ENCODE measurements at regions of chr3 and their contacts with region 1.

Region 1: DNA sequence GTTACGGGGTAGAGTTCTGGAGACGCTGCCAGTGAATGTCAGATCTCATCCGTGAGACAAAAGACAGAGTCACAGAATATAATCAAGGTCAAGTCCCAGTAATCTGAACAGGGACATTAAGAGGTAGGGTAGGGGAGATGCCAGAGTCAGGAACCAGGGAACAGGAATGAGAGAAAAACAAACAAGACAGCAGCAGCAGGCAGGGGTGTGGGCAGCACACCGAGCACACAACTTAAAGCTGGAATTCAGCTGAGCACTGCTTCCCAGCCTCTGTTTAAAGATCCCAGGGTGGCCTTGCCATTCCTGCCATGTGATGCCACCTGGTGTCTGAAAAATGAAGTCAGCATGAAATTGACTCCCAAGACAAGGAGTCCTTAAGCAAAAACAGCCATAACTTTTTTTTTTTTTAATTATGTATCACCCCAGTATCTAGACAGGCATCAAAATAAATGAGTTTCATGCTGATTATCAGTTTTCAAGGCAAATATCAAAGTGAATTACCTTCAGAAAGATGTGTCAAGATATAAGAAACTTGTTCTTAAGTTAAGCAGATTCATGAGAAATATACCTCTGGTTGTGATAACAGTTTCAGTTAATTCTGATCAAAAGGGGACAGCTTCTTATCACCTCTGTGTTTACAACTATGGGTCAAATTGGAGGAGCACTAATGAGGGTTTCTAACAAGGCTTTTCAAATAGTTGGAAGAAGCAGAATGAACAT is 203.7 kb downstream of the SLC9A9 start:
- DNase-seq: peak; percentile 64
- H3K4me3 ChIP-seq: no peak overlapping the region
- H3K27ac ChIP-seq: no peak overlapping the region
- H3K4me1 ChIP-seq: no peaks in the 10 kb centered on the region
- H3K27me3 ChIP-seq: no peaks in the 10 kb centered on the region
- CTCF ChIP-seq: peak; percentile 51 to 76

Region 2: DNA sequence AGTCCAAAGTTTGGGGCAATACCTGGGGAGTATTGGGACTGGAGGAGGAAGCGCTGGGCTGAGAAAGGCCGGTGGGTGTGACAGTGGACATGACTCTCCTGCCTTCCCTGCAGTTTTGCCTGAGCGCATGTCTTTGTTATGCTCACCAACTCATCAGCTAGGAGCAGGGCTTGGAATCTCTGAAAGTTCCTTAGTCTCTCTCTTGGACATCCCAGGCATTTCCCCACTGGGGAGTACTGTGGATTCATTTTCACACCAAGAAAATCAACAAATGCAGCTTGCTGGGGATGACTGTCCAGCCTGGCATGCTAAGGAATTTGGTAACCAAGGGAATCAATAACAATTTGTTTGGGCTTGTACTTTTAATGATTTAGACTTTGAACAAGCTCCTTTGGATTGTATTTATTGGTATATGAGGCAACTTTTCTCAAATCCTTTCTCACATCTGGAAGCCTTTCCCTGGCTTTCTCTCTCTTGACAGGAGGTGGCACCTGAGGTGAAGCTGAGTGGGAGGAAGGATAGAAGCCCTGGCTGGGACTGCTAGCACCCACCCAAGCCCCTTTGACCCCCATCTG is 573.5 kb before region 1 on chr3:
- CTCF ChIA-PET with region 1: interaction called, 9 read pairs
- dilution Hi-C with region 1: no loop called
- in situ Hi-C with region 1: no loop called
- intact Hi-C with region 1: loop called (anchors 1 kb)
- DNase-seq: peak; percentile 79
- H3K4me3 ChIP-seq: no peak overlapping the region
- H3K27ac ChIP-seq: peak overlapping the region; percentile 52
- H3K4me1 ChIP-seq: peaks cover 16% of the 10 kb centered on the region
- H3K27me3 ChIP-seq: no peaks in the 10 kb centered on the region
- CTCF ChIP-seq: peak; percentile 12 to 18

Region 3: DNA sequence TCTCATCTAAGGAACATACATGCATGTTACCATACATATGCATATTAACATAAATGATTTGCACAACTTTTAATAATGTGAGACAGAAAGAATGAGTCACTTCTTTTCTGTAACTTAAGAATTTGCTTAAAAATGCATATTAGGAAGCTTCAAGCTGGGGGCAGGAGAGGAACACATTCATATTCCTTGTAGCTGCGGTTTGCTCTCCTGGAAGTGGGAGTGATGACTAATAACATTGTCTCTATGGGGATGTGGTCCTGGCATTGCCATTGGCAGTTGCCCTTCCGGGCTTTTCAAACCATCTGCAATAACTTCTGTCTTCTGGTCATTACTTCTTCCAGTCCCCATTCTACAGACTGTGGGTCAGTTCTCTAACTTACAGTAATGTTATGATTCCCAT is 509.4 kb before region 1 on chr3:
- CTCF ChIA-PET with region 1: interaction called, 3 read pairs
- dilution Hi-C with region 1: no loop called
- in situ Hi-C with region 1: loop called in 1 of 2 experiments (anchors 25 kb)
- intact Hi-C with region 1: loop called (anchors 1 kb)
- DNase-seq: peak; percentile 89
- H3K4me3 ChIP-seq: no peak overlapping the region
- H3K27ac ChIP-seq: peak overlapping the region; percentile 3
- H3K4me1 ChIP-seq: peaks cover 18% of the 10 kb centered on the region
- H3K27me3 ChIP-seq: no peaks in the 10 kb centered on the region
- CTCF ChIP-seq: peak; percentile 15 to 40

Region 4: GRCh38 chr3:143329567-143330211 is 314.8 kb before region 1 on chr3:
- CTCF ChIA-PET with region 1: no interaction called
- dilution Hi-C with region 1: no loop called
- in situ Hi-C with region 1: no loop called
- intact Hi-C with region 1: loop called (anchors 2 kb)
- DNase-seq: no peak
- H3K4me3 ChIP-seq: no peak overlapping the region
- H3K27ac ChIP-seq: no peak overlapping the region
- H3K4me1 ChIP-seq: no peaks in the 10 kb centered on the region
- H3K27me3 ChIP-seq: peaks cover 5% of the 10 kb centered on the region
- CTCF ChIP-seq: no peak

Region 5: DNA sequence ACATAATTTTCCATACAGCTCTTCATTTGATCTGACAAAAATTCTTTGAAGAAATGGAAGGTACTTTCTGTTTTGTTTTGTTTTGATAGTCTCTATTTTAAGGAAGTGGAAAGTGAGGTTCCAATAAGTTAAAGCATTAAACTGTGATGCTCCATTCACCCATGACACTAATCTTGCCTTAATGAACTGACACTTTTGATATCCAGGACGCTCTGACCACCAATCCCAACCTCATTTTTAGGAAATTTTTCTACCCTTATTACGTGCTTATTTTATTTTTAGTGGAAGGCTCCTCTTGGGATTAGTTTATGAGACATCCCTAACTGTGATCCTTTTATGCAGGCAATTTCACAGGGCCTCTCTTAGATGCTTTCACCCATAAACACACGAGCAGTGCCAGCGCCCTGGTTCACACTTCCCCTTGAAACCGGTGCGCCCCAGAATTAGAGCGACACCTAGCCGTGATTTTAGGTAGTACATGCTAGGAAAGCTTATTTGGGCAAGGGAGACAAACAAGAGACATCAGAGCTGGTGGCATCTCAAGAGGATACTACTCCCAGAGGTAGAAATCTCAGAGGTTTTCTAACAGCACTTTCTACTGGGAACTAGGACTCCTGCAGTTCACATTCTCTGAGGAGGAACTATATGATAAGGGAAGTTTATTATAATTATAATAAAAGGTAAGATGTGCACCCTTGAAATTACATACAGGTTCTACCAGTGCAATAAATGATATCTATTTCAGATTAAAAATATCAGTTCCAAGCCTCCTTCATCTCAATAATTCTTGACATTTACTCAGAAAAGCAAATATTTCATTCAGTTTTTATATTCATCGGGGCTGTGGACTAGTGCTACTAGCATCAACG is 29.8 kb after region 1 on chr3:
- CTCF ChIA-PET with region 1: no interaction called
- dilution Hi-C with region 1: no loop called
- in situ Hi-C with region 1: no loop called
- intact Hi-C with region 1: loop called (anchors 1 kb)
- DNase-seq: peak; percentile 59
- H3K4me3 ChIP-seq: no peak overlapping the region
- H3K27ac ChIP-seq: no peak overlapping the region
- H3K4me1 ChIP-seq: peaks cover 3% of the 10 kb centered on the region
- H3K27me3 ChIP-seq: no peaks in the 10 kb centered on the region
- CTCF ChIP-seq: peak; percentile 91 to 95

Region 6: DNA sequence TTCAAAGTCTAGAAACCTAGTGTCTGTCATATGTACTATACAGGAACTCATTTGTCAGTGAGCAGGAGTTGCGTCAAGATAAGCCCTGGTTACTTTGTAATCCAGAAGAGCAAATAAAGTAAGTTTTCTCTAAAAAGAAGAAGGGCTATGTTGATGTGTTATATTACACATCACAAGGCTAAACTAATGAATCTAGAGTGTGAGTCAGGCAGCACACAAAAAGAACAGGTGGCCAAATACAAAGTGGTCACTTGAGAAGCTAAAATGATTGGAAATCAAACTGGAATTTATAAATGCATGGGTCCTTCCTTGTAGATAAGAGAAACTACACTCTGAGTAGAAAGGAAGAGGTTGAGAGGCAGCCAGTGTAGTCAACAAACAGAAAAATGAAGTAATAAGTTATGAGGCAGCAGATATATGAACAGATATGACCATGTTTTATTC is 1098.7 kb after region 1 on chr3:
- CTCF ChIA-PET with region 1: no interaction called
- dilution Hi-C with region 1: no loop called
- in situ Hi-C with region 1: no loop called
- intact Hi-C with region 1: no loop called
- DNase-seq: no peak
- H3K4me3 ChIP-seq: no peak overlapping the region
- H3K27ac ChIP-seq: no peak overlapping the region
- H3K4me1 ChIP-seq: no peaks in the 10 kb centered on the region
- H3K27me3 ChIP-seq: no peaks in the 10 kb centered on the region
- CTCF ChIP-seq: no peak